CD8-positive, alpha-beta memory T cell (primary cell): ENCODE measurements at regions of chr6 and their contacts with region 1.

Region 1: GRCh38 chr6:109073344-109074132 is 21.1 kb downstream of the SESN1 start:
- DNase-seq: peak; percentile 12 to 68 (median 62)
- H3K4me3 ChIP-seq: peak overlapping the region; percentile 14
- H3K4me3 Mint-ChIP-seq: peak overlapping the region; percentile 28 to 62 (median 39)
- H3K27ac ChIP-seq: no peak overlapping the region
- H3K27ac Mint-ChIP-seq: peak overlapping the region in 7 of 8 donors; percentile 3 to 77 (median 37)
- H3K4me1 ChIP-seq: peaks cover 26% of the 10 kb centered on the region
- H3K4me1 Mint-ChIP-seq: peaks cover 52 to 62% (median 57%) of the 10 kb centered on the region in 3 donors
- H3K27me3 ChIP-seq: no peaks in the 10 kb centered on the region
- H3K27me3 Mint-ChIP-seq: no peaks in the 10 kb centered on the region

Region 2: GRCh38 chr6:108541838-108542759 is 531.4 kb before region 1 on chr6:
- CTCF ChIA-PET with region 1: interaction called, 46 read pairs
- POLR2A ChIA-PET with region 1: no interaction called
- DNase-seq: peak; percentile 54 to 80 (median 65)
- H3K4me3 ChIP-seq: no peak overlapping the region
- H3K4me3 Mint-ChIP-seq: peak overlapping the region in 3 of 7 donors; percentile 8 to 32 (median 28)
- H3K27ac ChIP-seq: no peak overlapping the region
- H3K27ac Mint-ChIP-seq: peak overlapping the region in 3 of 8 donors; percentile 24 to 84 (median 33)
- H3K4me1 ChIP-seq: peaks cover 19% of the 10 kb centered on the region
- H3K4me1 Mint-ChIP-seq: peaks cover 20 to 26% (median 22%) of the 10 kb centered on the region in 3 donors
- H3K27me3 ChIP-seq: no peaks in the 10 kb centered on the region
- H3K27me3 Mint-ChIP-seq: peaks cover 0 to 8% of the 10 kb centered on the region in 2 donors

Region 3: DNA sequence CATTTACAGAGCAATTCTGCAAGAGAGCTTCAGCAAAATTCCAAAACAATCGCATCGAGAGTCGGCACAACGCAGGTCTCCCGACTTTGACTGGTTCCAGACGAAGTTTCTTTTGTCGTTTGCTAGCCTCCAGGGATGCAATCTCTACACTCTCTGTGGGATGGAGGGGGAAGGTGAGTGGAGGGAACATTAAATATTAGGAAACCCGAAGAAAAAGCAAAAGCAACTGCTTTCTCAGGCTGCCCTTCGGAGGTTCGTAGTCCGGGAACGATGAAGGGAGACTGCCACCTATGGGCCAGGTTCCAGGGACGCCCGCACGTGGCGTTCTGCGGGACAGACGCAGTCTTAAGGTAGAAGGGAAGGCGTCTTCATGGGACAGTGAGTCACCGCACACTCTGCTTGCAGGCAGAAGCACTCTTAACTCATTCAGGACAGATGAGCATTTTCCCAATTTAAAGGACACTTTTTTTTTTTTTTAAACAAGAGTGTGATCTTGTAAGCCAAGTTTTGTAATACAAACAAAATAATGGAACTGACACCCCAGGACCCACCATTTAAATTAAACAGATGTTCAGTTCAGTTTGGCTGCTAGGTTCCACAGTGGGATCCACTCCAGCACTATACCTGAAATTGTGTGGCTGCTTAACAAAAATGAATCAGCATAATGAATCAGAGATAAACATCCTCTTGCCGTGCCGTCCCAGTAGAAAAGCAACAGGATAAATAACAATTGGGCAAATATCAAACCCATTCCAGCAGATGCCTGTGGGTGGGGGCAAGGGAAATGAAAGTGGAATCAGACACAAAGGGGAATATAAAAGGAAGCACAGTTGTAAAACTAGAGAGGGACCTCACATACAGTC is 291.1 kb before region 1 on chr6:
- CTCF ChIA-PET with region 1: interaction called, 10 read pairs
- POLR2A ChIA-PET with region 1: no interaction called
- DNase-seq: peak; percentile 56 to 84 (median 62)
- H3K4me3 ChIP-seq: peak overlapping the region; percentile 27
- H3K4me3 Mint-ChIP-seq: peak overlapping the region; percentile 84 to 89 (median 85)
- H3K27ac ChIP-seq: no peak overlapping the region
- H3K27ac Mint-ChIP-seq: peak overlapping the region in 5 of 8 donors; percentile 8 to 77 (median 75)
- H3K4me1 ChIP-seq: no peaks in the 10 kb centered on the region
- H3K4me1 Mint-ChIP-seq: peaks cover 8 to 12% (median 9%) of the 10 kb centered on the region in 3 donors
- H3K27me3 ChIP-seq: no peaks in the 10 kb centered on the region
- H3K27me3 Mint-ChIP-seq: peaks cover 0 to 4% of the 10 kb centered on the region in 2 donors

Region 4: GRCh38 chr6:108966855-108967755 is 106.4 kb before region 1 on chr6:
- CTCF ChIA-PET with region 1: no interaction called
- POLR2A ChIA-PET with region 1: no interaction called
- DNase-seq: peak in 2 of 5 donors; percentile 4 to 14
- H3K4me3 ChIP-seq: no peak overlapping the region
- H3K4me3 Mint-ChIP-seq: peak overlapping the region in 3 of 7 donors; percentile 15 to 74 (median 44)
- H3K27ac ChIP-seq: no peak overlapping the region
- H3K27ac Mint-ChIP-seq: peak overlapping the region in 6 of 8 donors; percentile 55 to 92 (median 81)
- H3K4me1 ChIP-seq: no peaks in the 10 kb centered on the region
- H3K4me1 Mint-ChIP-seq: peaks cover 29 to 46% (median 43%) of the 10 kb centered on the region in 3 donors
- H3K27me3 ChIP-seq: no peaks in the 10 kb centered on the region
- H3K27me3 Mint-ChIP-seq: no peaks in the 10 kb centered on the region

Region 5: DNA sequence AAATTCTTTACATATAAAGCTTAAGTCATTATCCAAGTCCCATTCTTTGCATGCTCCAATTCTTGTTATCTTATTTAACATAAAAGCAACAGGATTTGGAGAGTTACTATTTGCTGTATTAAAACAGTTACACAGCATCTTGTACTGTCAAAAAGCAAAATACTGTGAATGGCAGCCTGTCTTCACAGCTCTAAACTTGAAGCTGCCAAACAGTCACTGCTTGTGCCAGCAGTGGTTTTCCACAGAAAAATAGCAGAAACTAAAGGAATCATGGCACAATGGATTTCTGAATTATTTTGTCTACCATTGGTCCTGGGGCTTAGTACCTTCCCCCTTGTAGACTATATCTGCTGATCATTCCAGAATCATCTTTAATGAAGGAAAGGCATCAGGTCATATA is 86.4 kb before region 1 on chr6:
- CTCF ChIA-PET with region 1: interaction called, 5 read pairs
- POLR2A ChIA-PET with region 1: interaction called, 11 read pairs
- DNase-seq: no peak
- H3K4me3 ChIP-seq: no peak overlapping the region
- H3K4me3 Mint-ChIP-seq: no peak overlapping the region
- H3K27ac ChIP-seq: no peak overlapping the region
- H3K27ac Mint-ChIP-seq: no peak overlapping the region
- H3K4me1 ChIP-seq: no peaks in the 10 kb centered on the region
- H3K4me1 Mint-ChIP-seq: peaks cover 0 to 9% (median 7%) of the 10 kb centered on the region in 3 donors
- H3K27me3 ChIP-seq: no peaks in the 10 kb centered on the region
- H3K27me3 Mint-ChIP-seq: no peaks in the 10 kb centered on the region

Region 6: GRCh38 chr6:109083657-109084056 is 10.1 kb after region 1 on chr6:
- CTCF ChIA-PET with region 1: interaction called, 13 read pairs
- POLR2A ChIA-PET with region 1: no interaction called
- DNase-seq: no peak
- H3K4me3 ChIP-seq: no peak overlapping the region
- H3K4me3 Mint-ChIP-seq: no peak overlapping the region
- H3K27ac ChIP-seq: no peak overlapping the region
- H3K27ac Mint-ChIP-seq: no peak overlapping the region
- H3K4me1 ChIP-seq: no peaks in the 10 kb centered on the region
- H3K4me1 Mint-ChIP-seq: peaks cover 3 to 14% (median 10%) of the 10 kb centered on the region in 3 donors
- H3K27me3 ChIP-seq: no peaks in the 10 kb centered on the region
- H3K27me3 Mint-ChIP-seq: no peaks in the 10 kb centered on the region